ENCODE measurements at regions of chr15 and their contacts with region 1.

Region 1: DNA sequence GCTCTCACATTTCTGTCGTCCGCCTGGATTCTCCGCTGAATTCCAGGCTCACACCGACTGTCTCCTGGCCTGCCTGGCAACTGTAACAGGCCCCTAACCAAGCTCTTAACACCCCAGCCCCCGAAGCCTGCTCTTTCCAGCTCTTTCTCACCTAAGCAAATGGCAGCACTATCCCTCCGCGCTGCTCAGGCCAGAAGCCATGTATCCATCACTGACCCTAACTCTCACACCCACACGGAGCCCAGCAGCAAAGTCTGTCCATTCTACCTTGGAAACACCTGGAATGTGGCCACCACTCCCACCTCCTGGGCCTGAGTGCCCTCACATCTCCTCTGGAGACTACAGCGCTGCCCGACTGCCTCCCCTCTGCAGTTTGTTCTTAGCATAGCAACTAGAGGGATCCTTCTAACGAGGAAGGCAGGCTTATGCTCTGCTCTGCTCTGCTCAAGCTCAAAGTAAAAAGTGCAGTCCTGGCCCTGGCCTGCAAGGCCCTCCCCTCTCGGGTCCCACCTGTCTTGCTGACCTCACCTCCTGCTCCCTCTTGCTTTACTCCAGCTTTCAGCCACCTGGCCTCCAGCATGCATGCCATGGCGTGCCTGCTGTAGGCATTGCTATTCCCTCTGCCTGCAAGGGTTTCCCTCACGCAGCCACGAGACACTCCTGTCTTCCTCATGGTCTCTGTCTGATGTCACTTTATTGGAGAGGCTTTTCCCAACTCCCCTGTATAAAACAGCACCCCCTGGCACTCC is 27.2 kb downstream of the FEM1B start:
- DNase-seq: no peak
- ATAC-seq: no peak

Region 2: DNA sequence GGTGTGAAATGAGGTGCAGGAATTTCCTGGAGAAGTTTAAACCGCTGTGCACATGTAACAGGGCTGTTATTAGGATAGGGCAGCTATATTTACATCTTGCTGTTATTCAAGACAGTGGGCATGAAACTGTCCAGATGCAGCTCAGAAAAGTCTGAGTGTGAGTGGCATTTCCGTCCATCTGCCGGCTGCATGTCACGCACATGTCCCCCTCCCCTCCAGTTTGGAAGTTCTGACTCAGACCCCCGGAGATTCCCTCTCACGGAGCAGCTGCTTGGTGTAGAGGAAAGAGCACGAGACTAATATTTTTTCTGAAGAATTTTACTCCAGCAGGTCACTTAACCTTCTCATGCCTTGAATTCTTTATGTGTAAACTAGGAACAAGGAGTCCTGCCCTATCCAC is 42.6 kb after region 1 on chr15:
- intact Hi-C with region 1: loop called (anchors 5 kb)
- DNase-seq: no peak
- ATAC-seq: peak; percentile 28

Region 3: GRCh38 chr15:68372291-68372811 is 67.6 kb after region 1 on chr15:
- intact Hi-C with region 1: loop called (anchors 5 kb)
- DNase-seq: peak; percentile 52
- ATAC-seq: peak; percentile 67

Region 4: GRCh38 chr15:68383161-68384074 is 78.7 kb after region 1 on chr15:
- intact Hi-C with region 1: loop called (anchors 2 kb)
- DNase-seq: no peak
- ATAC-seq: peak; percentile 71

Region 5: GRCh38 chr15:68517285-68517761 is 212.6 kb after region 1 on chr15:
- intact Hi-C with region 1: loop called (anchors 10 kb)
- DNase-seq: peak; percentile 73
- ATAC-seq: peak; percentile 89

Measured in Right ventricle myocardium superior (tissue), 1 donor.